ENCODE measurements at regions of chr12 and their contacts with region 1.

Region 1: DNA sequence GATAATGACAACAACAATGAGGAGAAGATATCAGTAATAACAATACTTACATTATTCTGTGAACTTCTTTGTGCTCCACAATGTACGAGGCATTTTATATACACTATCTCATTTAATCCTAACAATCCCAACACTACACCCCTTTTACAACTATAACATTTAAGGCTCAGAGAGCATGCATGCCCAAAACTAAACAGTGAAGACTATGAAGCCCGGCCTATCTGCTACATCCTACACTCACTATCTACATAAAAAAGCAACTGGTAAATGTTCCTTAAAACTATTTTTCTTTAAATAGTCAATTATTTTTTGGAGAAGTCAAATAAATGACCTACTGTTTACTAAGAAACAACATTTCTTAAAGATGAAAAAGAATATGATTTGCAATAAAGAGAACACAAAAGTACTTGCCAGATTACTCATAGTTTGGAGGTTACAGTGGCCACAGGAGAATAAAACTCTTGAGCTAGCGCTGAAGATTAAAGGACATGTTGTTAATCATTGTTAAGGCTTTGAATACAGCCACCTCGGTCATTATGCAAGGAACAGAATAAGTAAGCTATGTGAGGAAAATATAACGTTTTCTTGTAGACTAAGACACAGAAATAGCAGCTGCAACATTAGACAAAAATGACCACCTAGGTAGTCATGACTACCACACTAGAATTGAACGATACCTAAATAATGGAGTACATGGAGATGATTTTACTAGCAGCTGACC is 56.7 kb downstream of the EPS8 start:
- DNase-seq: peak; percentile 57
- ATAC-seq: peak; percentile 84
- H3K4me3 ChIP-seq: no peak overlapping the region
- H3K27ac ChIP-seq: no peak overlapping the region
- H3K4me1 ChIP-seq: no peaks in the 10 kb centered on the region
- H3K27me3 ChIP-seq: no peaks in the 10 kb centered on the region
- CTCF ChIP-seq: no peak
- EP300 ChIP-seq: peak; percentile 56 to 74; a peak in 3 of 4 replicates
- POLR2A ChIP-seq: no peak
- RAD21 ChIP-seq: no peak

Region 2: DNA sequence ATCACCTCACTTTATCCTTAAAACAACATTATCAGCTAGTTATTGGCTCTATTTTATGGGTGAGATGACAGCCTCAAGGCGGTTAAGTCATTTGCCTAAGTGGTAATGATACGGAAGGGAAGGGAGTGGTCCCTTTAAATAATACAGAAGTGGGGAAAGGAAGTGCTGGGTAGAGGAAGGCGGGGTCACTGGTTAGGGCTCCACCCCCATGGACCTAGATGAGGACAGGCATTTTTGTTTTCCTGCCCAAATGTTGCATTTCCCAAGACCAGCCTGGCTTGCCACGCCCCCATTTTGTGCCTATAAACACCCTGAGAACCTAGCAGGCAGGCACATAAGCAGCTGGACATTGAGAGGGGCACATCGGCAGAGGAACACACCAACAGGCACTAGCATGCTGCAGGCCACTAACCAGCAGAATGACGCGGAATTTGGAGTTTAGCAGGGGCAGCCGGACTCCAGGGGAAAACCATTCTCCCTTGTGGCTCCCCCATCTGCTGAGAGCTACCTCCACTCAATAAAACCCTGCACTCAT is 44.2 kb before region 1 on chr12:
- CTCF ChIA-PET with region 1: interaction called, 7 read pairs
- POLR2A ChIA-PET with region 1: interaction called, 6 read pairs
- RAD21 ChIA-PET with region 1: interaction called, 11 read pairs
- SMC1A ChIA-PET with region 1: interaction called, 29 read pairs
- in situ Hi-C with region 1: no loop called
- intact Hi-C with region 1: no loop called
- DNase-seq: no peak
- ATAC-seq: peak; percentile 85
- H3K4me3 ChIP-seq: no peak overlapping the region
- H3K27ac ChIP-seq: no peak overlapping the region
- H3K4me1 ChIP-seq: 0 out of 2 replicates have a peak, but pooled peaks cover 7% of the 10 kb centered on the region
- H3K27me3 ChIP-seq: no peaks in the 10 kb centered on the region
- CTCF ChIP-seq: no peak
- EP300 ChIP-seq: no peak
- POLR2A ChIP-seq: no peak
- RAD21 ChIP-seq: no peak

Region 3: GRCh38 chr12:15706052-15706676 is 26.3 kb before region 1 on chr12:
- CTCF ChIA-PET with region 1: interaction called, 12 read pairs
- POLR2A ChIA-PET with region 1: interaction called, 12 read pairs
- RAD21 ChIA-PET with region 1: interaction called, 44 read pairs
- SMC1A ChIA-PET with region 1: interaction called, 213 read pairs
- in situ Hi-C with region 1: no loop called
- intact Hi-C with region 1: loop called (anchors 2 kb)
- DNase-seq: no peak
- ATAC-seq: no peak
- H3K4me3 ChIP-seq: no peak overlapping the region
- H3K27ac ChIP-seq: no peak overlapping the region
- H3K4me1 ChIP-seq: no peaks in the 10 kb centered on the region
- H3K27me3 ChIP-seq: no peaks in the 10 kb centered on the region
- CTCF ChIP-seq: no peak
- EP300 ChIP-seq: no peak
- POLR2A ChIP-seq: no peak
- RAD21 ChIP-seq: no peak

Region 4: GRCh38 chr12:15719230-15719629 is 13.3 kb before region 1 on chr12:
- CTCF ChIA-PET with region 1: interaction called, 5 read pairs
- POLR2A ChIA-PET with region 1: interaction called, 10 read pairs
- RAD21 ChIA-PET with region 1: interaction called, 20 read pairs
- SMC1A ChIA-PET with region 1: interaction called, 213 read pairs
- in situ Hi-C with region 1: no loop called
- intact Hi-C with region 1: no loop called
- DNase-seq: no peak
- ATAC-seq: peak; percentile 10; the same call in 1 of the 3 replicates
- H3K4me3 ChIP-seq: no peak overlapping the region
- H3K27ac ChIP-seq: no peak overlapping the region
- H3K4me1 ChIP-seq: no peaks in the 10 kb centered on the region
- H3K27me3 ChIP-seq: no peaks in the 10 kb centered on the region
- CTCF ChIP-seq: no peak
- EP300 ChIP-seq: no peak
- POLR2A ChIP-seq: no peak
- RAD21 ChIP-seq: no peak

Region 5: DNA sequence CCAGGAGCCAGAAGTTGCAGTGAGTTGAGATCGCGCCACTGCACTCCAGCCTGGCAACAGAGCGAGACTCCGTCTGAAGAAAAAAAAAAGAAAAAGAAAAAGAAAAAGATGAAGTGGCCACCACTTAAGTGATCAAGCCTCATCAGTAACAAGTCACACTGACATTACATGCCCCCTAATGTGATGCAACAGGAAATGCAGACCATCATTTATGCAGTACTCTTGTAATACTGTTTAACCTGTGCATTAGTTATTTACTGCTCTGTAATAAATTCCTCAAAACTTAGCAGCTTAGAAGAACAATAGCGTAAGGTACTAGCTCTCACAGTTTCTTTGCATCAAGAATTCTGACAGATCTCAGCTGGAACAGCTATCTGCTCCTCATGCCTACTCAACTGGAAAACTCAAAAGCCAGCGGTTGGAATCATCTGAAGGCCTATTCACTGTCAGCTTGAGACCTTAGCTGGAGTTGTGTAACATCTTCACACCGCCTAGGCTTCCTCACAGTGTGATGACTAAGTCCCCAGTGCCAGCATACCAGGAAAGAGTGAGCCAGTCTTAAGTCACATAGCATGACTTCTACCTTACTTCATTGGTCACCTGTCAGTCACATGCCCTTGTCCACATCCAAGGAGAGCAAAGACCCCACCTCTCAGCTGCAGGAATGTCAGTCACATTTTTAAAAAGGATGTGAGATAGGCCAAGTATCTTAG is 25.2 kb after region 1 on chr12:
- CTCF ChIA-PET with region 1: interaction called, 33 read pairs
- POLR2A ChIA-PET with region 1: interaction called, 28 read pairs
- RAD21 ChIA-PET with region 1: interaction called, 12 read pairs
- SMC1A ChIA-PET with region 1: interaction called, 198 read pairs
- in situ Hi-C with region 1: no loop called
- intact Hi-C with region 1: no loop called
- DNase-seq: no peak
- ATAC-seq: peak; percentile 83
- H3K4me3 ChIP-seq: no peak overlapping the region
- H3K27ac ChIP-seq: no peak overlapping the region
- H3K4me1 ChIP-seq: no peaks in the 10 kb centered on the region
- H3K27me3 ChIP-seq: no peaks in the 10 kb centered on the region
- CTCF ChIP-seq: no peak
- EP300 ChIP-seq: no peak
- POLR2A ChIP-seq: no peak
- RAD21 ChIP-seq: no peak

Region 6: GRCh38 chr12:15772405-15773018 is 40.0 kb after region 1 on chr12:
- CTCF ChIA-PET with region 1: interaction called, 30 read pairs
- POLR2A ChIA-PET with region 1: interaction called, 48 read pairs
- RAD21 ChIA-PET with region 1: interaction called, 52 read pairs
- SMC1A ChIA-PET with region 1: interaction called, 111 read pairs
- in situ Hi-C with region 1: no loop called
- intact Hi-C with region 1: loop called (anchors 1 kb)
- DNase-seq: no peak
- ATAC-seq: peak; percentile 4
- H3K4me3 ChIP-seq: no peak overlapping the region
- H3K27ac ChIP-seq: no peak overlapping the region
- H3K4me1 ChIP-seq: no peaks in the 10 kb centered on the region
- H3K27me3 ChIP-seq: no peaks in the 10 kb centered on the region
- CTCF ChIP-seq: peak; percentile 22 to 39 (median 30); a peak in 4 of 6 replicates
- EP300 ChIP-seq: no peak
- POLR2A ChIP-seq: no peak
- RAD21 ChIP-seq: peak; percentile 37; the same call in 1 of the 2 replicates

Region 7: GRCh38 chr12:15789220-15790171 is 57.0 kb after region 1 on chr12 and contains the start of gene EPS8:
- CTCF ChIA-PET with region 1: interaction called, 4 read pairs
- POLR2A ChIA-PET with region 1: interaction called, 8 read pairs
- RAD21 ChIA-PET with region 1: interaction called, 43 read pairs
- SMC1A ChIA-PET with region 1: interaction called, 8 read pairs
- in situ Hi-C with region 1: no loop called
- intact Hi-C with region 1: loop called (anchors 5 kb)
- DNase-seq: peak; percentile 50
- ATAC-seq: peak; percentile 87
- H3K4me3 ChIP-seq: peak within 1 kb of the TSS; percentile 79
- H3K27ac ChIP-seq: no peak within 1 kb of the TSS
- H3K4me1 ChIP-seq: no peaks in the 10 kb centered on the region
- H3K27me3 ChIP-seq: peaks cover 0 to 8% of the 10 kb centered on the region in 2 experiments; a peak in 2 of 4 replicates
- CTCF ChIP-seq: no peak
- EP300 ChIP-seq: 0 out of 4 replicates have a peak, but pooled peaks of 1 of the 2 experiments have one; percentile 18
- POLR2A ChIP-seq: peak; percentile 61; the same call in 1 of the 2 replicates
- RAD21 ChIP-seq: no peak
- polyA plus RNA-seq, gene EPS8: 1.3 to 1.6 TPM

Region 8: GRCh38 chr12:16349131-16349460 is 616.6 kb after region 1 on chr12:
- CTCF ChIA-PET with region 1: no interaction called
- POLR2A ChIA-PET with region 1: no interaction called
- RAD21 ChIA-PET with region 1: no interaction called
- SMC1A ChIA-PET with region 1: no interaction called
- in situ Hi-C with region 1: no loop called
- intact Hi-C with region 1: no loop called
- DNase-seq: peak; percentile 7
- ATAC-seq: peak; percentile 39
- H3K4me3 ChIP-seq: no peak overlapping the region
- H3K27ac ChIP-seq: no peak overlapping the region
- H3K4me1 ChIP-seq: no peaks in the 10 kb centered on the region
- H3K27me3 ChIP-seq: no peaks in the 10 kb centered on the region
- CTCF ChIP-seq: no peak
- EP300 ChIP-seq: no peak
- POLR2A ChIP-seq: no peak
- RAD21 ChIP-seq: no peak

Measured in GM12878 (cell line).